MCF 10A (cell line): ENCODE measurements at regions of chr9 and their contacts with region 1.

Region 1: DNA sequence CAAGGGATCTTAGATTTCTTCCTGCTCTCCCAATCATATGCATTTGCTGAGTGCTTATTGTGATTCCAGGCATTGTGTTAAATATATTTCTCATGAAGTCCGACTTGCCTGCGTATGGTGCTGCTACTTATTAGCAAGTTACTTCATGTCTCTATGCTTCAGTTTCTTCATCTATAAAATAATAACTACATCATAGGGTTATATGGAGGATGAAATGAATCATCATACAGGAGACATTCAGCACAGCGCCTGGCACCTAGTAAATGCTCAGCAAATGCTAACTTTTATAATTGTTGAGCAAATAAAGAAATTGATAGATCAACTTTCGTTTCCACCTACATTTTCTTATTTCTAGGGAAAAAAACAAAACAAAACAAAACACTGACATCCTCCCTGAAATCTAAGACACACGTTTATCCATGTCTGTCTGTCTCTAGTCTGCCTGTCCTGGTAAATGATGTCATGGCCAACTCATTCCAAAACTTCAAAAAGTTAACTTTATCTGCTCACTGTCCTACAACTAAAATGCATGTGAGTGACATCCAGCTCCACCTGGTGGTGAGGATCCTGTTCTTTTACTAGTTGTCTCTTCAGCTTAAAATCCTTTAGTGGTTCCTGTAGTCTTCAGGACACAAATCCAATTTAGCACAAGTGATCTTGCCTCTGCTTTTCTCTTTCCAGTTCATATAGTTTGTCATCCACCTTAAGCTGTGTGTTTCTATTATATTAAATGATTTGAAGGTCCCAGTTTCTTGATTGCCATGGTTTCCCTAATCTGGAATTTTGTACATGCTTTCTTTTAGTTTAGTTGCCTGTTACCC is 27.7 kb downstream of the PPP3R2 start:
- DNase-seq: peak; percentile 45
- H3K4me3 Mint-ChIP-seq: no peak overlapping the region
- H3K27ac Mint-ChIP-seq: no peak overlapping the region
- H3K4me1 Mint-ChIP-seq: no peaks in the 10 kb centered on the region
- H3K27me3 Mint-ChIP-seq: no peaks in the 10 kb centered on the region
- CTCF ChIP-seq: no peak

Region 2: GRCh38 chr9:101578378-101578777 is 11.3 kb after region 1 on chr9:
- CTCF ChIA-PET with region 1: interaction called, 20 read pairs
- POLR2A ChIA-PET with region 1: interaction called, 3 read pairs
- intact Hi-C with region 1: no loop called
- DNase-seq: no peak
- H3K4me3 Mint-ChIP-seq: no peak overlapping the region
- H3K27ac Mint-ChIP-seq: no peak overlapping the region
- H3K4me1 Mint-ChIP-seq: no peaks in the 10 kb centered on the region
- H3K27me3 Mint-ChIP-seq: no peaks in the 10 kb centered on the region
- CTCF ChIP-seq: no peak